Gastrocnemius medialis (tissue), 4 donors: ENCODE measurements at regions of chr6 and their contacts with region 1.

Region 1: DNA sequence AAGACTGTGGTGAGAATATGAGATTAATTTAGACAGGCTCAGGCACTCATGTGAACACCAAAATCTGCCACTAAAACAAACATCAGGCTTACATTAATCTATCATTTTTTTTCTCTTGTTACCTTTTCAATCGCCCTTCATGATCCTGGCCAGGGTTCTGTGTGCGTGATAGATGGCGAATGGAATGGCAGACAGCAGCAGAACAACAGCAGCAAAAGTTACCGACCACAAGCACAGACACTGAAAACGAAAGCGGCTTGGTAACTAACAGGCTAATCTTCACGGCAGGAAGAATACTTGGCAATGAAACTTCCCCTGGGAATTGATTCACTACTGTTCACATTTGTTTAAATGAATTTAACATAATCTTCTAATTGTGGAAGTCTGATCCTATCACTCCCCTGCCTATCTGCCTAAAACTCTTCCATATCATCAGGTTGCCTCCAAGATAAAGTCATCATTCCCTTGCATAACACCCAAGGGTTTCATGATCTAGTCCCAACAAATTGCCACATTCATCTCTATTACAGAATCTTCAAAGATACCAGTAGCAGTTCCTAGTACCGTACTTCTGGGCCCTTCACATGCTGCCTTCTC is 28.7 kb downstream of the PTPRK start:
- DNase-seq: no peak
- ATAC-seq: peak; percentile 67 to 89
- H3K4me3 ChIP-seq: peak overlapping the region; percentile 35 to 72 (median 54)
- H3K27ac ChIP-seq: peak overlapping the region; percentile 61 to 78 (median 70)
- H3K4me1 ChIP-seq: peaks cover 14% of the 10 kb centered on the region in 2 donors
- H3K27me3 ChIP-seq: no peaks in the 10 kb centered on the region
- CTCF ChIP-seq: no peak
- POLR2A ChIP-seq: no peak

Region 2: GRCh38 chr6:128848212-128848935 is 356.7 kb after region 1 on chr6:
- in situ Hi-C with region 1: no loop called
- intact Hi-C with region 1: no loop called
- DNase-seq: no peak
- ATAC-seq: no peak
- H3K4me3 ChIP-seq: no peak overlapping the region
- H3K27ac ChIP-seq: no peak overlapping the region
- H3K4me1 ChIP-seq: no peaks in the 10 kb centered on the region
- H3K27me3 ChIP-seq: no peaks in the 10 kb centered on the region
- CTCF ChIP-seq: no peak
- POLR2A ChIP-seq: no peak

Region 3: GRCh38 chr6:129317931-129318820 is 826.5 kb after region 1 on chr6:
- in situ Hi-C with region 1: no loop called
- intact Hi-C with region 1: no loop called
- DNase-seq: no peak
- ATAC-seq: no peak
- H3K4me3 ChIP-seq: no peak overlapping the region
- H3K27ac ChIP-seq: no peak overlapping the region
- H3K4me1 ChIP-seq: no peaks in the 10 kb centered on the region
- H3K27me3 ChIP-seq: no peaks in the 10 kb centered on the region
- CTCF ChIP-seq: no peak
- POLR2A ChIP-seq: no peak

Region 4: GRCh38 chr6:129490521-129491245 is 999.0 kb after region 1 on chr6:
- in situ Hi-C with region 1: no loop called
- intact Hi-C with region 1: loop called (anchors 5 kb)
- DNase-seq: no peak
- ATAC-seq: peak; percentile 88 to 93
- H3K4me3 ChIP-seq: peak overlapping the region; percentile 0 to 38 (median 24)
- H3K27ac ChIP-seq: peak overlapping the region; percentile 71 to 83 (median 80)
- H3K4me1 ChIP-seq: peaks cover 23 to 34% of the 10 kb centered on the region in 2 donors
- H3K27me3 ChIP-seq: no peaks in the 10 kb centered on the region
- CTCF ChIP-seq: no peak
- POLR2A ChIP-seq: peak; percentile 30 to 52